GM18951 (cell line): ENCODE measurements at regions of chr5 and their contacts with region 1.

Region 1: GRCh38 chr5:140145818-140146522 is 20.2 kb downstream of the IGIP start:
- POLR2A ChIP-seq: no peak

Region 2: DNA sequence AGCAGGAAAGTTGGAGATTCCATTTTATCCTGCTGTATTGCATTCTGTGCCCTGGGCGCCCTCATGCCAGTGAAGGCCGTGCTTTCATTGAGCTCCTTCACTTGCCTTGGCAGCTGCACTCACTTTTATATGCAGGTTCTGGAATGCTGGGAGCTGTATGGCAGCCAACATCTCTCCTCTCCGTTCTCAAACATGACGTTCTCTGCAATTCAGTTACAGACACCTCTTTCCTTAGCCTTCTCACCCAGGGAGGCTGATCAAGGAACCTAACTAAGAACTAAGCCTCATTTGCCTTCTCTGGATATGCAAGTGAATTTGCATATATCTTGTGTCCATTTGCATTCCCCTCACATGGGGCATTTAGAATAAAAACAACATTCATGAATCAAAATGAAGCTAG is 61.4 kb before region 1 on chr5:
- in situ Hi-C with region 1: loop called (anchors 5 kb)
- POLR2A ChIP-seq: no peak